Activated CD4-positive, alpha-beta T cell treated with anti-CD3 and anti-CD28 coated beads, Interleukin-2, amount 10 ng/mL, durations not matched to agents 7 days and 5 days (primary cell): ENCODE measurements at regions of chr9 and their contacts with region 1.

Region 1: DNA sequence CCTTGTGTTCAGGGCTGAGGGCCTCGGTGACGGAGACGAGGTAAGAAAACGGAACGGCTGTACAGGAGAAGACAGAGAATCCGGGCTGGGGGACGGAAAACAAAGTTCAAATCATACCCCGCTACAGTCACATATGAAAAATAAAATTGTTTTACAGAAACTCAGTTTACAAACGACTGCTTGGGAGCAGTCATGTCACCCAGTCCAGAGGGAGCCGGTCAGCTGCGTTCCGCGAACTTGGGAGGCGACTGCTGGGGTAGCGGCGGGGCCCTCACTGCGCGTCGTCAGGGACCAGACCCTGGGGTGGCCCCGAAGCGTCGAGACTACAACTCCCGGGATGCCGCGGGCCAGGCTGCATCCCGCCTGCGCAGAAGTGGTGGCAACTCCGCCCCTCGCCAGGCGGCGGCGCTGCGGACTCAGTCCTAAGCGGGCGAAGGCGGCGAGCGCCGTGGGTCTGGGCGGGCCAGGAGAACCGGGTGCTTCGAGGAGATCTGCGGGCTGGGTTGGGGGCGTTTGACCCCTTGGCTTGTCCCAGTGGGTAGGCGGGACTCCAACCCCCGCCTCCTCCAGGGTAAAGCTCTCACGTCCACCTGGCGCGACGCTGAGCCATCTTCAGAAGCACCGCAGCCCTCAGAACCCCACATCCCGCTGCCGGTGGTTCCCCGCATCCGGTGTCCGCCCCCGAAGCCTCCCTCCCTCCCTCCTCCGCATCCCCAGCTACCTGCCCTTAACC is 4.0 kb downstream of the SIT1 start:
- DNase-seq: peak; percentile 94
- H3K4me3 Mint-ChIP-seq: peak overlapping the region; percentile 92
- H3K27ac Mint-ChIP-seq: peak overlapping the region; percentile 94
- H3K4me1 Mint-ChIP-seq: peaks cover 64% of the 10 kb centered on the region
- H3K27me3 Mint-ChIP-seq: no peaks in the 10 kb centered on the region

Region 2: GRCh38 chr9:35277628-35278359 is 368.9 kb before region 1 on chr9:
- CTCF ChIA-PET with region 1: no interaction called
- POLR2A ChIA-PET with region 1: no interaction called
- DNase-seq: no peak
- H3K4me3 Mint-ChIP-seq: no peak overlapping the region
- H3K27ac Mint-ChIP-seq: no peak overlapping the region
- H3K4me1 Mint-ChIP-seq: peaks cover 6% of the 10 kb centered on the region
- H3K27me3 Mint-ChIP-seq: peaks cover 11% of the 10 kb centered on the region

Region 3: DNA sequence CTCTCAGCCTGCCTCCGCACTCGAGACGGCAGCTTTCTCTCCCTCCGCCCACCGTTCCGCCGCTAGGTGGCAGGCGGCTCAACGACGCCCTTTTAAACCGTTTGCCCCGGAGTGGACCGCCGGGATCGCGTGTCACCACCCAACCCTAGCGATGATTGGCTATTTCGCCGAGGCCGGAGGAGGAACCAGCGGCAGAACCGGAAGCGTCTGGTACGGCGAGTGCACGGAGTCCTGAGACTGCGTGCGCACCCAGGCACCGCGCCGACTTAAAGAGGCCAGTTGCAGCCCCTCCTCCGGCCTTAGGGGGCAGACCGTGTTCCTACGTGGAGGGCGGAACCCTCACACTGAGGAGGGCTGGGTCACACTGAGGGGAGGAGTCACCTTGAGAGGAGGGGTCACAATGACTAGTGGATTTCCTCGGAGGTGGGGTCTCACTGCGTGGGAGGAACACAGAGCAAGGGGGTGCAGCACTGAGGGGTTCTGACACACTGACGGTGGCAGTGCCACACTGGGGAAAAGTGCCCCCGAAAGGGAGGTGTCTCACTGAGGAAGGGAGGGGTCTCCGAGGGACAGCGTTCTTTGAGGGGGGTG is 42.6 kb before region 1 on chr9:
- CTCF ChIA-PET with region 1: interaction called, 92 read pairs
- POLR2A ChIA-PET with region 1: interaction called, 4 read pairs
- DNase-seq: peak; percentile 100
- H3K4me3 Mint-ChIP-seq: peak overlapping the region; percentile 91
- H3K27ac Mint-ChIP-seq: peak overlapping the region; percentile 97
- H3K4me1 Mint-ChIP-seq: peaks cover 37% of the 10 kb centered on the region
- H3K27me3 Mint-ChIP-seq: no peaks in the 10 kb centered on the region

Region 4: GRCh38 chr9:35616681-35617459 is 29.8 kb before region 1 on chr9:
- CTCF ChIA-PET with region 1: interaction called, 92 read pairs
- POLR2A ChIA-PET with region 1: interaction called, 3 read pairs
- DNase-seq: peak; percentile 65
- H3K4me3 Mint-ChIP-seq: peak overlapping the region; percentile 75
- H3K27ac Mint-ChIP-seq: peak overlapping the region; percentile 85
- H3K4me1 Mint-ChIP-seq: peaks cover 45% of the 10 kb centered on the region
- H3K27me3 Mint-ChIP-seq: peaks cover 11% of the 10 kb centered on the region

Region 5: GRCh38 chr9:35657546-35658136 is 10.9 kb after region 1 on chr9 and contains the start of gene RMRP:
- CTCF ChIA-PET with region 1: interaction called, 74 read pairs
- POLR2A ChIA-PET with region 1: interaction called, 3 read pairs
- DNase-seq: peak; percentile 91
- H3K4me3 Mint-ChIP-seq: peak within 1 kb of the TSS; percentile 93
- H3K27ac Mint-ChIP-seq: peak within 1 kb of the TSS; percentile 99
- H3K4me1 Mint-ChIP-seq: peaks cover 64% of the 10 kb centered on the region
- H3K27me3 Mint-ChIP-seq: peaks cover 4% of the 10 kb centered on the region
- total RNA-seq, gene RMRP: 1,959 to 11,185 TPM

Region 6: DNA sequence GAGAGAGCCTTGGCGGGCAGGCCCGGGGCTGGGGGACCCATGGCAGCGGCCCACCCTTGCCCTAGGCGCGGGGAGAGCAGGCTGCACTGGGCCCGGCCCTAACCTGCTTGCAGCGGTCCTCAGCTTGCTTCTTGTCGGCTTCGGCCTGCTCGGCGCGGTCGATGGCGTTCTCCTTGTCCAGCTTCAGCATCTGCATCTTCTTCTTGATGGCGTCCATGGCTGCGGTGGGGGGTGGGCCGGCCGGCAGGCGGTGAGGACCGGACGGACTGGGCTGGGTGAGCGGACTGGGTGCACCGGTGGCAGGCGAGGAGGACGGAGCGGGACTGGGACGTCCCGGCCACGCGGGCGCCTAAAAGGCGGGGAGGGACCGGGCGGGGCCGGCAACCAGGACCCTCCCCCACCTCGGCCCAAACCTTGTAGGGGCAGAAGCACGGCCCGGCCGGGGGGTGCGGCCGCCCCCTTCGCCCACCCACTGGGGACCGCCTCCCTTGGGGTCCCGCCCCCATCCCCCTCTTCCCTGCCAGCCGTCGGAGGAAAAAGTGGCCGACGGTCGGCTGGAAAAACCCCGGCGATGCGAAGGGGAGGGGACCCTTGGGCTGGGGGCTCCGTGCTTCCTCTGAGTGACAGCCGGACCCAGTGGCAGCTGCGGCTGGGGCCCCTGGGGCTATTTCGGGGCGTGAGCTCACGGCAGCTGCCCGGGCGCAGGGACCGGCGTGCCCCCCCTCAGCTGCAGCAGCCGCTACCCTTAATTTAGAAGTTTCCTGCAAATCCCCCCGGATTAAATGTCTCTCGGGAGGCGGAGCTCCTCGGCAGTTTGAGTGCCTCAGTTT is 43.1 kb after region 1 on chr9 and contains the start of gene TPM2:
- CTCF ChIA-PET with region 1: interaction called, 10 read pairs
- POLR2A ChIA-PET with region 1: no interaction called
- DNase-seq: no peak
- H3K4me3 Mint-ChIP-seq: peak within 1 kb of the TSS; percentile 79
- H3K27ac Mint-ChIP-seq: peak within 1 kb of the TSS; percentile 64
- H3K4me1 Mint-ChIP-seq: peaks cover 22% of the 10 kb centered on the region
- H3K27me3 Mint-ChIP-seq: no peaks in the 10 kb centered on the region
- total RNA-seq, gene TPM2: 13.1 to 13.4 TPM

Region 7: GRCh38 chr9:35732122-35732799 is 85.6 kb after region 1 on chr9 and contains the starts of genes CREB3 and TLN1:
- CTCF ChIA-PET with region 1: interaction called, 29 read pairs
- POLR2A ChIA-PET with region 1: no interaction called
- DNase-seq: peak; percentile 98
- H3K4me3 Mint-ChIP-seq: no peak within 1 kb of the TSS
- H3K27ac Mint-ChIP-seq: peak within 1 kb of the TSS; percentile 85
- H3K4me1 Mint-ChIP-seq: peaks cover 20% of the 10 kb centered on the region
- H3K27me3 Mint-ChIP-seq: no peaks in the 10 kb centered on the region
- total RNA-seq, gene CREB3: 18.1 to 18.3 TPM
- total RNA-seq, gene TLN1: 362 to 422 TPM